GM12878 (cell line): ENCODE measurements at regions of chr14 and their contacts with region 1.

Region 1: GRCh38 chr14:84646786-84647500 is 883.0 kb upstream of the FLRT2 start:
- DNase-seq: no peak
- ATAC-seq: no peak
- H3K4me3 ChIP-seq: no peak overlapping the region
- H3K27ac ChIP-seq: no peak overlapping the region
- H3K4me1 ChIP-seq: no peaks in the 10 kb centered on the region
- H3K27me3 ChIP-seq: no peaks in the 10 kb centered on the region
- CTCF ChIP-seq: no peak
- EP300 ChIP-seq: no peak
- POLR2A ChIP-seq: no peak
- RAD21 ChIP-seq: no peak

Region 2: DNA sequence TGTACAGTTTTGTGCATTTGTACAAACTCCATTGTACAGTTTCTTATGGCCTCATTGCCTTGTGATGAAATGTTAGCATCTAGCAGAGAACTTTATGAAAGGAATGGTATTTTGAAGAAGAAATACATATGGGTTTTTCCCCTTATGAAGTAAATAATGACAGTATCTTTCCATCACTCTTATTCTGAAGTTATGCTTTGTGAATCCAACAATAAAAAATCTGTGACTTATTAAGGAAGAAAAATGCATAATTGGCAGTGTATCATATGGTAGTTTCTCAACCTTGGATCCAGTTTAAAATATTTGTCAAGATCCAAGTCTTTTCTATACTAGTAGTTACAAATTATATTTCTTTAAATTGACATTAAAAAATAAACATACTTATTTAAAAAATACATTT is 23.9 kb after region 1 on chr14:
- CTCF ChIA-PET with region 1: no interaction called
- POLR2A ChIA-PET with region 1: no interaction called
- RAD21 ChIA-PET with region 1: no interaction called
- SMC1A ChIA-PET with region 1: no interaction called
- in situ Hi-C with region 1: no loop called
- intact Hi-C with region 1: loop called (anchors 2 kb)
- DNase-seq: no peak
- ATAC-seq: no peak
- H3K4me3 ChIP-seq: no peak overlapping the region
- H3K27ac ChIP-seq: no peak overlapping the region
- H3K4me1 ChIP-seq: no peaks in the 10 kb centered on the region
- H3K27me3 ChIP-seq: no peaks in the 10 kb centered on the region
- CTCF ChIP-seq: no peak
- EP300 ChIP-seq: no peak
- POLR2A ChIP-seq: no peak
- RAD21 ChIP-seq: no peak